ENCODE measurements at regions of chr5 and their contacts with region 1.

Region 1: GRCh38 chr5:67693956-67694809 is 497.6 kb upstream of the CD180 start:
- DNase-seq: peak; percentile 78
- H3K4me3 ChIP-seq: no peak overlapping the region
- H3K27ac ChIP-seq: peak overlapping the region; percentile 60 to 72
- H3K4me1 ChIP-seq: peaks cover 8% of the 10 kb centered on the region
- H3K27me3 ChIP-seq: no peaks in the 10 kb centered on the region
- CTCF ChIP-seq: no peak
- POLR2A ChIP-seq: no peak

Region 2: DNA sequence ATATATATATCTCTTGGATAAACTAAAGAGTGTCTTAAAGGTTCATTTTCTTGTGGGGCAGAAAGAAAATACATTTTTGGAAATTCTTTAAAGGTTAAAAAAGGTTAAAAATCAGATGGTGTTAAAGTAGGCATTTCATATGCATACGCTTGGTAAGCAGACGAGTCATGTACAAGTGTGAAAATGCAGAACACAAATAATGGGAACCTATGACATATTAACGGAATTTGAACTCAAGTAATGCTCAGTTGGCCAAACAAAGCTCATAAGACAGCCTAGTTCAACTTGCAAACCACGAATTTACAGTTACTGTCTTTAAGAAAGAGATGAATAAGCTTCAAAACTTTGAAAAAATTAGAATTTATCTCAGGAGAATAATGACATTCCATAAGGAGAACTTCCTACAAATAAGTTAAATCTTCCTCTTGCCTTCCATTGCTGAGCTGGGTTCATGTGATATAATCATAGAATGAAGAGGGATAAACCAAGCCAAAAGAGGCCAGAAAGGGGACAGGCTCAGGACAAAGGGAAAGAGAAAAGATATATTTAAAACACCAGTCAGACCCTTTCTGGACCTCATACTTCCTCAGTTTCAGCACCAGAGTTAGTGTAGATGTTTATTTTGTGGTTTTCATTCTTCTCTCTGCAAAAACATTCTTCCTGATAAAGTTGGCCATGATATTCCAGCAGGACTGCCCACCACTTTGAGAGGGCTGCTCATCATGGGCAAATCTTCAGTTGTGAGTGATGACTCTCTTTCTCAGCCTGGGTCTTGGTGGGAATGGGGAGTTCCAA is 240.9 kb before region 1 on chr5:
- intact Hi-C with region 1: loop called (anchors 5 kb)
- DNase-seq: no peak
- H3K4me3 ChIP-seq: no peak overlapping the region
- H3K27ac ChIP-seq: no peak overlapping the region
- H3K4me1 ChIP-seq: no peaks in the 10 kb centered on the region
- H3K27me3 ChIP-seq: no peaks in the 10 kb centered on the region
- CTCF ChIP-seq: no peak
- POLR2A ChIP-seq: no peak

Region 3: DNA sequence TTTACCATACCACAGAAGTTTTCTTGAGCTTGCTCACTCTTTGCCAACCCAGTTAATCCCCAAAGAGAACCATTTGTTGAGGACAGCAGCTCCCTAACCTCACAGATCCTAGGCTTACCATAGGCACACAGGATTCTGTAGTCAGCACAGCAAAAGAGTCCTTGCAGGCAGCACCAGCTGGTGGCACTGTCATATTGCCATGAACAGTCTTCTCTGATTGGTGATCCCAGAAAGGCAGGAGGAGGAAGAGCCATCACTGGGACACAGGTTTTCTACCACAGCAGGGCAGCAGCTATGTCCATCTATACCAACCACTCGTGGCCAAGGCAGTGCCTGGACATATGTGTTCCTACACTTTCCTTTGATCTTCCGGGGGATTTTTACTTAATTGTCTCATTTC is 200.5 kb before region 1 on chr5:
- intact Hi-C with region 1: loop called (anchors 10 kb)
- DNase-seq: peak; percentile 38
- H3K4me3 ChIP-seq: no peak overlapping the region
- H3K27ac ChIP-seq: no peak overlapping the region
- H3K4me1 ChIP-seq: no peaks in the 10 kb centered on the region
- H3K27me3 ChIP-seq: no peaks in the 10 kb centered on the region
- CTCF ChIP-seq: peak in 3 of 4 experiments; percentile 28 to 37 (median 35)
- POLR2A ChIP-seq: no peak

Region 4: DNA sequence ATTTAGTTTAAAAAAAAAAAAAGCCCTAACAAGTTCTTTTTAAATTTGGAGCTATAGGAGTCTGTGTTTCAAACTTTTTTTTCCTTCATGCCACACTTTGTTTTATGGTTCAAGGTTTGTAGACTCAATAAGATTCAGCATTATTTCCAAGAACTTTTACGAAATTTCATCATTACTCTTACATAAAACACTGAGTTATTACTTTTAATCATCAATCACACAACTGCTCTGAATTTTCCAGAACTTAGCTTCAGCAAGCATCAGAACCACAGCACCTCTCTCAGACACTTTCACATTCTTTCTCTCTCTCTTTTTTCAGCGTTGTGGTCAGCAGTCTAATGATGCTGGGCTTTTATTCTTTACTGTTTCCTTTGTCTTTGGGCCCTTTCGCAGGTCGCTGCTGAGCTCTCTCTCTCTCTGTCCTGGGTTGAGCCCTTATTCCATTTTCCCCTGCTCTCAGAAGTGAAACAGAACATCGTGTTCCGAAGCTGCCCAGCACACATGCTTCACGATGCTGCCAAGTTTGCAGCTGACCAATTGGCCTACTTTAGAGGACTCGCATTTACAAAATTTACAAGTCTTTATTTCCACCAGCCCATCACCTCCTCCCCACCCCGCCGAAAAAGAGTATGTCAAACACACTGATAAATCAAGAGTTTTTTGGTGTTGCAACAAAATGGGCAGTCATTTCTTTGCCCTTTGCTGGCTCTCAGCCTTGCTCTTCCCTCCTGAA is 476.8 kb after region 1 on chr5:
- intact Hi-C with region 1: loop called (anchors 10 kb)
- DNase-seq: peak; percentile 55
- H3K4me3 ChIP-seq: no peak overlapping the region
- H3K27ac ChIP-seq: peak overlapping the region; percentile 50 to 64
- H3K4me1 ChIP-seq: no peaks in the 10 kb centered on the region
- H3K27me3 ChIP-seq: no peaks in the 10 kb centered on the region
- CTCF ChIP-seq: no peak
- POLR2A ChIP-seq: no peak

Region 5: DNA sequence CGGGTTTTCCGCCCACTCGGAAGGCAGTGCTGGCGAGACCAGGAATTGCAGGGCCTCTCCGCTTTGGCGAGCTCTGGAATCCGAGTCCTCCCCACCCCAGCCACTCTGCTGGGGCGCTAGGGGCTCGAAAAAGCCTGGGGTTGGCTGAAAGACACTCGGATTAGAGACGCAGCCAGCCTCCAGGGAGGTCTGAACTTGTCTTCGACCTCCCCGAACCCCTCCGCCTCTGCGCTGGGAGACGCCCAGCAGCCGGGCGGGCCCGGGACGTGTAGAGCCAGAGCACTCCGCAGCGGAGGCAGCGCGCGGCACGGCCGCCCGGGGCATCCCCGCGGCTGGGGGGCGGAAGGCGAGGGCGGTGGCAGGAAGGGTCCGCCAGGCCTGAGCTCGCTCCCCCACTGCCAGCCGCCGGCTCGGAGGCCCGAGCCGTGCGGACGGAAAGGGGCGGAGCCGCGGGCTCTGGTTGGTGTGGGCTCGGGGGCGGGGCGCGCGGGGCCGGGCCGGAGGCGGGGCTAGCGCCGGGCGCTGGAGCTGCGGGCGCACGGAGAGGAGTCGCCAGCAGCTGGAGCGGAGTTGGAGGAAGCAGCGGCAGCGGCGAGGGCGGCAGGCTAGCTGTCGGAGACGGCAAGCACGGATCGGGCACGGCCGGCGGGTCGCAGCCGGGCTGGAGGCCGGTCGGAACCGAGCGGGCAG is 521.2 kb after region 1 on chr5 and contains the start of gene PIK3R1:
- intact Hi-C with region 1: loop called (anchors 10 kb)
- DNase-seq: peak; percentile 96
- H3K4me3 ChIP-seq: peak within 1 kb of the TSS; percentile 67 to 86
- H3K27ac ChIP-seq: peak within 1 kb of the TSS; percentile 95 to 96
- H3K4me1 ChIP-seq: no peaks in the 10 kb centered on the region
- H3K27me3 ChIP-seq: no peaks in the 10 kb centered on the region
- CTCF ChIP-seq: peak in 3 of 4 experiments; percentile 31 to 63 (median 52)
- POLR2A ChIP-seq: peak; percentile 95
- total RNA-seq, gene PIK3R1: 71.6 to 81.2 TPM

Region 6: DNA sequence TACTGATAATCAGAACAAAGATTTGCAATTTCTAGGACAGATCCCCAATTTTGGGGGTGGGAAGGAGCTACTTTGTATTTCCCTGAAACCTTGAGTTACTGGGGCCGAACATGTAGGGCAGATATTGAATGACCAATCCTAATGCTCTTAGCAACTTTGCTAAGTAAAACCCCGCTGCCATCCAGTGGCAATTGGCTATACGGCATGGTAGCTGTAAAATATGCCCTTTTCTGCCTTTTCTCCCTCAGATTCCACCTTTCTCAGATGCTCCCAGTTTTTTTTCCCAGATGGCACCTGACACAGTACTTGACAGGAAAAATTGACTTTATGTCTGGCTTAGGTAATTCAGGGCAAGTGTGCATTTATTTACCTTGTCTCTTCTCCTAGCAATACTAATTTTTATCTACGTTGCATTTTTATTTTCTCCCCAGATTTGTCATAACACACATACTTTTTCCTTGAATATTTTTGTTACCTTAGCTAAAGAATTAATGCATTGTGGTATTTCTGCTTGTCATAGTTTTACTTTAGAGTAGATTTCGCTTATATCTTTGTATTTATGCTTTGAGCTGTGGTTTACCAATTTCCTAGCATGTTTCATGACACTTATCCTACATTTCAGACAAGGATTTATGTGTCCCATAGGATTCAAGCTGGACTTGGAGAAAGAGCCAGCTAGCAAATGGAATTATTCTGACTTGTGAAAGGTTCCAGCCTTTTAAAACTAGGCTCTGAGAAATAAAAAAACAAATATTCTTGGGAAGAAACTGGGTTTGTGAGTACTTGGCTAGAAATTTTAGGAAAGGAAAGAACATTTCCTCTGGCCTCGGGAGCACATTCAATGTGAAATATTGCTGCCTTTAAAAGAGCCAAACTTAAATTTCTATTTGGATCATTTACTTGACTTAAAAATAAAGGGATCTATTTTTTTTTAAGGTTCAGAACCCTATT is 558.8 kb after region 1 on chr5:
- intact Hi-C with region 1: loop called (anchors 5 kb)
- DNase-seq: peak; percentile 42
- H3K4me3 ChIP-seq: no peak overlapping the region
- H3K27ac ChIP-seq: peak overlapping the region; percentile 20 to 47
- H3K4me1 ChIP-seq: peaks cover 9% of the 10 kb centered on the region
- H3K27me3 ChIP-seq: no peaks in the 10 kb centered on the region
- CTCF ChIP-seq: peak; percentile 23 to 72 (median 58)
- POLR2A ChIP-seq: no peak

Region 7: DNA sequence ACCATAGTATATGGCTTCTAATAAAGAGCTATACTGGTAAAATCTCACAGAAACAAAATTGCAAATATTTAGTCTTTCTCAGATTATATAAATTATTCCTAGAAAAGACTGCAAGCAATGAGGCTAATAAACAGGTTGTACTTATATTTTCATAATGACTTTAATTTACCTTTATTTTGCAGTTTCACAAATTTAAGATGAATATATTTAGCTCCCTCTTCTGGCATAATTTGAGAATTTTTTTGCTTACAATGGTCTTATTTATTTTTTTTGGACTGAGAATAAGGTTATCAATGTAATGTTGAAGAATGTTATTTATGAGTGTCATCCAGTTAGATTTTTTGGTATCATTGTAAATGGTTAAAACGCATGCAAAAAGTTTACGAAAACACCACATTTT is 578.1 kb after region 1 on chr5:
- intact Hi-C with region 1: loop called (anchors 5 kb)
- DNase-seq: no peak
- H3K4me3 ChIP-seq: no peak overlapping the region
- H3K27ac ChIP-seq: no peak overlapping the region
- H3K4me1 ChIP-seq: no peaks in the 10 kb centered on the region
- H3K27me3 ChIP-seq: no peaks in the 10 kb centered on the region
- CTCF ChIP-seq: peak in 2 of 4 experiments; percentile 37 to 42
- POLR2A ChIP-seq: no peak

Measured in prostate gland (tissue), 2 donors.